HepG2 (cell line): ENCODE measurements at regions of chr1 and their contacts with region 1.

Region 1: GRCh38 chr1:26907071-26907917 is 6.5 kb downstream of the NR0B2 start:
- DNase-seq: peak; percentile 77
- ATAC-seq: peak; percentile 61
- H3K4me3 ChIP-seq: no peak overlapping the region
- H3K27ac ChIP-seq: peak overlapping the region; percentile 22
- H3K4me1 ChIP-seq: peaks cover 73% of the 10 kb centered on the region
- H3K27me3 ChIP-seq: no peaks in the 10 kb centered on the region; a peak in 1 of 5 replicates
- CTCF ChIP-seq: no peak
- EP300 ChIP-seq: no peak
- POLR2A ChIP-seq: no peak
- RAD21 ChIP-seq: no peak

Region 2: GRCh38 chr1:26949266-26949925 is 42.1 kb after region 1 on chr1:
- CTCF ChIA-PET with region 1: no interaction called
- POLR2A ChIA-PET with region 1: interaction called, 371 read pairs
- in situ Hi-C with region 1: no loop called
- intact Hi-C with region 1: loop called (anchors 1 kb)
- DNase-seq: no peak
- ATAC-seq: no peak
- H3K4me3 ChIP-seq: no peak overlapping the region
- H3K27ac ChIP-seq: peak overlapping the region; percentile 63
- H3K4me1 ChIP-seq: peaks cover 68% of the 10 kb centered on the region
- H3K27me3 ChIP-seq: no peaks in the 10 kb centered on the region
- CTCF ChIP-seq: no peak
- EP300 ChIP-seq: no peak
- POLR2A ChIP-seq: no peak
- RAD21 ChIP-seq: no peak

Region 3: DNA sequence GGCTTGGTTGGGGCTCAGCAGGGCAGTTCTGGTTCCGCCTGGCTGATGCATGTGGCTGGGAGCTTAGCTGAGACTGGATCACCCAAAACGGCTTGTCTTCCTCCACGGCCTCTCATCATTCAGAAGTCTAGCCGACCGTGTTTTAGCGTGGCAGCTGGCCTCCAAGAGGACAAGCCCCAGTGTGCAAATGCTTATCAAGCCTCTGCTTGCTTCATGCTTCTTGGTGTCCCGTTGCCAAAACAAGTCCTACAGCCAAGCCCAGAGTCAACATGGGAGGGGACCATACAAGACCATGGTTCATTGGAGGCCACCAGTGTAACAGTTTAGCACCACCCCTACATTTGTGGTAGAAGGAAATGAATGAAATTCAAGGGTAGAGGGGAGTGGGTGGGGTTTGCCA is 63.5 kb after region 1 on chr1:
- CTCF ChIA-PET with region 1: no interaction called
- POLR2A ChIA-PET with region 1: no interaction called
- in situ Hi-C with region 1: no loop called
- intact Hi-C with region 1: no loop called
- DNase-seq: peak; percentile 82
- ATAC-seq: peak; percentile 61
- H3K4me3 ChIP-seq: peak overlapping the region in 1 of 3 experiments; percentile 45; a peak in 2 of 6 replicates
- H3K27ac ChIP-seq: no peak overlapping the region
- H3K4me1 ChIP-seq: peaks cover 81% of the 10 kb centered on the region
- H3K27me3 ChIP-seq: 0 out of 5 replicates have a peak, but pooled peaks cover 0 to 4% of the 10 kb centered on the region in 2 experiments
- CTCF ChIP-seq: no peak
- EP300 ChIP-seq: peak in 1 of 2 experiments; percentile 55; a peak in 1 of 4 replicates
- POLR2A ChIP-seq: no peak
- RAD21 ChIP-seq: no peak

Region 4: DNA sequence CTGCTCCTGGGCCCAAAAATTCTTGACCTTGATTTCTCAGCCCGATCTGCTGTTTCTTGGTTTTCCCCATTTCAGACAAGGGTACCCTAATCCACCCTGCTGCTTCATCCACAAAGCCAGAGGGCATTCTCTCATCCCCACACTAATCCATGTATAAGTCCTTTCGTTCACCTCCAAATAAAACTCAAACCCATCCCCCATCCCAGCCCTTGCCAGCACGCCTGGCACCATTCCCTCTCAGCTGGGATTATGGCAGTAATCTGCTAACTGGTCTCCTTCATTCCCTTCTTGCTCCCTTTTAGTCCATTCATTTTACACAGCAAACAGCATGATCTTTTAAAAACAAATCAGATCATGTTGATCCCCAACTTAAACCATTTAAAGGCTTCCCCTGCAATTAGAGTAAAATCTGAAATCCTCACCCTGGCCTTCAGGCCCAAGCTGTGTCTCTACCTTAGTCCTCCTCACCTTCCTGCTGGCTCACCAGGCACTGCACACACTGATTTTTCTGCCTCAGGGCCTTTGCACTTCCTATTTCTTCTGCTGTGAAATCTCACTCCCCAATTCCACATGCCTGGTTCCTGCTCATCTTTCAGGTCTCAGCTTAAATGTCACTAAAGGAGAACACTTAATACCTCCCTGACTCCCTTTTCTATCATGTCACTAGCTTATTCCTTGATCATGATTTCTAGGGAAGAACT is 74.0 kb after region 1 on chr1:
- CTCF ChIA-PET with region 1: no interaction called
- POLR2A ChIA-PET with region 1: no interaction called
- in situ Hi-C with region 1: no loop called
- intact Hi-C with region 1: no loop called
- DNase-seq: no peak
- ATAC-seq: no peak
- H3K4me3 ChIP-seq: no peak overlapping the region
- H3K27ac ChIP-seq: no peak overlapping the region
- H3K4me1 ChIP-seq: peaks cover 37% of the 10 kb centered on the region
- H3K27me3 ChIP-seq: no peaks in the 10 kb centered on the region
- CTCF ChIP-seq: no peak
- EP300 ChIP-seq: no peak
- POLR2A ChIP-seq: no peak
- RAD21 ChIP-seq: no peak

Region 5: DNA sequence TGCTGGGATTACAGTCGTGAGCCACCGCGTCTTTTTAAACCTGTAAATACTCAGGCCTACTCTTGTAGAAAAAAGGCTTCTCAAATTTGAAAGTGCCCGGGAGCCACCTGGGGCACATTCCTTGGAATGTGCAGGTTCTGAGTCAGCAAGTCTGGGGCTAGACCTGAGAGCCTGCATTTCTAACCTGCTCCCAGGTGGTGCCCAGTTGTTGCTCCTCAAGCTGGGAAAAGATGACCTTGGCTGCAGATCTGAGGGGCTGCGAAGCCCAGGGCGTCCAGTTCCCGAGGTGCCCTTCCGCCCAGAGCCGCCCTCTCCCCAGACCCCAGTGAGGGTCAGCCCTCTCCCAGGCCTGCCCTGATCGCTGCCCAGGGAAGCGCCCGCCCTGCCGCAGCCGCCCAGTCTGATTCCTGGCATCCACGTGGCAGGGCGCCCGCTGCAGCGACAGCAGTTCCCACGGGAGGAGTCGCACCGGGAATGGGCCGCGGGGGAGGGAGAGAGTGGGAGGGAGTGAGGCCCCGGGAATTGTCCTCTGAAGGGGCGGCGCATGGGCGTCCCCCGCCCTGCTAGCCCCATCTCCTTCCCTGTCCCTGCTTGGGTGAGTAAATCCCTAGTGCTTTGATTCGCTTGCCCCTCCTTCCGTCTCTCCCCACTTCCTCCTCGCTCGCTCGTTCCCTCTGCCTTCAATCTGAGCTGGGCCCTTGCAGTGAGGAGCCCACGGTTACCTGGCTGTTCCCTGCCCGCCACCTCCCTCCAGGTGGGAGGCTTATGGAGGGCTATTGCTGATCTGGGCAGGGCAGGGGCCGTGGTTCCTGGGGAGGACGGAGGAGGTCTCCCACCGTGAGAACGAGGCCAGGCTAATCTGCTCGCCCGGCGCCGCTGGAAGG is 124.2 kb after region 1 on chr1:
- CTCF ChIA-PET with region 1: no interaction called
- POLR2A ChIA-PET with region 1: no interaction called
- in situ Hi-C with region 1: no loop called
- intact Hi-C with region 1: no loop called
- DNase-seq: no peak
- ATAC-seq: no peak
- H3K4me3 ChIP-seq: no peak overlapping the region
- H3K27ac ChIP-seq: no peak overlapping the region
- H3K4me1 ChIP-seq: peaks cover 28% of the 10 kb centered on the region
- H3K27me3 ChIP-seq: peaks cover 0 to 18% of the 10 kb centered on the region in 2 experiments; a peak in 3 of 5 replicates
- CTCF ChIP-seq: no peak
- EP300 ChIP-seq: no peak
- POLR2A ChIP-seq: no peak
- RAD21 ChIP-seq: no peak